B cell (primary cell): ENCODE measurements at regions of chr5 and their contacts with region 1.

Region 1: DNA sequence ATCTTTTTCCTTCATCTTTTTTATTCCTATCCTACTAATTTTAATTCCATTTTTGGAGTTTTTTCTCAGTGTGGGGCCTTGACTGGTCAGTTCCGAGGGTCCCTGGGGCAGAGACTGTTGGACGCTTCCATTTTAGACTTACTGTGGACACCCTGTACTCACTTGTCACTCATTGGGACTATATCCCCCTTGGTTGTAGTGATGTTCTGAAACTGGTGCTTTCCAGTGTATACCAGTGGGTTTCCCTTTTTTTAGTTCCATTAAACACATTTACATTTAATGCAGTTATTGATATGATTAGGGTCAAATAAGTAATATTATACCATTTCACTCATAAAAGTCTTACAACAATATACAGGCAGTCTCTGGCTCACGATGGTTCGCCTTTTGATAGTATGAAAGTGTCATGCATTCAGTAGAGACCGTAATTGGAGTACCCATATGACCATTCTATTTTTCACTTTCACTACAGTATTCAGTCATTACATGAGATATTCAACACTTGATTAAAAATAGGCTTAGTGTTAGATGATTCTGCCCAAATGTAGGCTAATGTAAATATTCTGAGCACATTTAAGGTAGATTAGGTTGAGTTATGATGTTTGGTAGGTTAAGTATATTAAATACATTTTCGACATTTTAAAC is 46.0 kb downstream of the CNOT6 start:
- DNase-seq: no peak
- ATAC-seq: no peak
- H3K4me3 ChIP-seq: no peak overlapping the region
- H3K4me3 Mint-ChIP-seq: no peak overlapping the region
- H3K27ac ChIP-seq: no peak overlapping the region
- H3K27ac Mint-ChIP-seq: no peak overlapping the region
- H3K4me1 ChIP-seq: no peaks in the 10 kb centered on the region
- H3K4me1 Mint-ChIP-seq: peaks cover 19% of the 10 kb centered on the region
- H3K27me3 ChIP-seq: no peaks in the 10 kb centered on the region
- H3K27me3 Mint-ChIP-seq: no peaks in the 10 kb centered on the region
- CTCF ChIP-seq: no peak

Region 2: GRCh38 chr5:179967489-179967888 is 572.7 kb before region 1 on chr5:
- CTCF ChIA-PET with region 1: no interaction called
- POLR2A ChIA-PET with region 1: no interaction called
- intact Hi-C with region 1: no loop called
- DNase-seq: no peak
- ATAC-seq: no peak
- H3K4me3 ChIP-seq: no peak overlapping the region
- H3K4me3 Mint-ChIP-seq: no peak overlapping the region
- H3K27ac ChIP-seq: peak overlapping the region; percentile 15 to 35
- H3K27ac Mint-ChIP-seq: peak overlapping the region; percentile 46
- H3K4me1 ChIP-seq: peaks cover 24 to 31% of the 10 kb centered on the region in 2 donors
- H3K4me1 Mint-ChIP-seq: peaks cover 48% of the 10 kb centered on the region
- H3K27me3 ChIP-seq: no peaks in the 10 kb centered on the region
- H3K27me3 Mint-ChIP-seq: no peaks in the 10 kb centered on the region
- CTCF ChIP-seq: no peak

Region 3: GRCh38 chr5:180563994-180564393 is 23.8 kb after region 1 on chr5:
- CTCF ChIA-PET with region 1: interaction called, 3 read pairs
- POLR2A ChIA-PET with region 1: interaction called, 10 read pairs
- intact Hi-C with region 1: no loop called
- DNase-seq: no peak
- ATAC-seq: no peak
- H3K4me3 ChIP-seq: no peak overlapping the region
- H3K4me3 Mint-ChIP-seq: no peak overlapping the region
- H3K27ac ChIP-seq: no peak overlapping the region
- H3K27ac Mint-ChIP-seq: no peak overlapping the region
- H3K4me1 ChIP-seq: no peaks in the 10 kb centered on the region
- H3K4me1 Mint-ChIP-seq: no peaks in the 10 kb centered on the region
- H3K27me3 ChIP-seq: no peaks in the 10 kb centered on the region
- H3K27me3 Mint-ChIP-seq: no peaks in the 10 kb centered on the region
- CTCF ChIP-seq: no peak